WTC11 (cell line): ENCODE measurements at regions of chr11 and their contacts with region 1.

Region 1: GRCh38 chr11:66268283-66268951 is at the start of gene RAB1B:
- DNase-seq: peak; percentile 100
- ATAC-seq: peak; percentile 83
- H3K4me3 Mint-ChIP-seq: peak within 1 kb of the TSS; percentile 97
- H3K27ac Mint-ChIP-seq: peak within 1 kb of the TSS; percentile 99
- H3K4me1 Mint-ChIP-seq: peaks cover 12% of the 10 kb centered on the region
- H3K27me3 Mint-ChIP-seq: no peaks in the 10 kb centered on the region; the same call in 1 of the 2 replicates
- CTCF ChIP-seq: no peak
- total RNA-seq, gene RAB1B: 125 to 134 TPM (median 130 TPM) in 3 replicates

Region 2: DNA sequence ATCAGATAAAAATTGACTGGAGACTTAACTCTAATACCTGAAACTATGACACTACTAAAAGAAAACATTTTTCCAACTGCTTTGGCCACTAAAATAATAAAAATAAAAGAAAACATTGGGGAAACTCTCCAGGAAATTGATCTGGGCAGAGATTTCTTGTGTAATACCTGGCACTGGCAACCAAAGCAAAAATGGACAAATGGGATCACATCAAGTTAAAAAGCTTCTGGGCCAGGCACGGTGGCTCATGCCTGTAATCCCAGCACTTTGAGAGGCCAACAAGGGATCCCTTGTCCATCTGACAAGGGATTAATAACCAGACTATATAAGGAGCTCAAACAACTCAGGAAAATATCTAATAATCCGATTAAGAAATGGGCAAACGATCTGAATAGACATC is 64.6 kb before region 1 on chr11:
- CTCF ChIA-PET with region 1: no interaction called
- POLR2A ChIA-PET with region 1: no interaction called
- DNase-seq: no peak
- ATAC-seq: no peak
- H3K4me3 Mint-ChIP-seq: no peak overlapping the region
- H3K27ac Mint-ChIP-seq: no peak overlapping the region
- H3K4me1 Mint-ChIP-seq: no peaks in the 10 kb centered on the region
- H3K27me3 Mint-ChIP-seq: no peaks in the 10 kb centered on the region
- CTCF ChIP-seq: no peak

Region 3: DNA sequence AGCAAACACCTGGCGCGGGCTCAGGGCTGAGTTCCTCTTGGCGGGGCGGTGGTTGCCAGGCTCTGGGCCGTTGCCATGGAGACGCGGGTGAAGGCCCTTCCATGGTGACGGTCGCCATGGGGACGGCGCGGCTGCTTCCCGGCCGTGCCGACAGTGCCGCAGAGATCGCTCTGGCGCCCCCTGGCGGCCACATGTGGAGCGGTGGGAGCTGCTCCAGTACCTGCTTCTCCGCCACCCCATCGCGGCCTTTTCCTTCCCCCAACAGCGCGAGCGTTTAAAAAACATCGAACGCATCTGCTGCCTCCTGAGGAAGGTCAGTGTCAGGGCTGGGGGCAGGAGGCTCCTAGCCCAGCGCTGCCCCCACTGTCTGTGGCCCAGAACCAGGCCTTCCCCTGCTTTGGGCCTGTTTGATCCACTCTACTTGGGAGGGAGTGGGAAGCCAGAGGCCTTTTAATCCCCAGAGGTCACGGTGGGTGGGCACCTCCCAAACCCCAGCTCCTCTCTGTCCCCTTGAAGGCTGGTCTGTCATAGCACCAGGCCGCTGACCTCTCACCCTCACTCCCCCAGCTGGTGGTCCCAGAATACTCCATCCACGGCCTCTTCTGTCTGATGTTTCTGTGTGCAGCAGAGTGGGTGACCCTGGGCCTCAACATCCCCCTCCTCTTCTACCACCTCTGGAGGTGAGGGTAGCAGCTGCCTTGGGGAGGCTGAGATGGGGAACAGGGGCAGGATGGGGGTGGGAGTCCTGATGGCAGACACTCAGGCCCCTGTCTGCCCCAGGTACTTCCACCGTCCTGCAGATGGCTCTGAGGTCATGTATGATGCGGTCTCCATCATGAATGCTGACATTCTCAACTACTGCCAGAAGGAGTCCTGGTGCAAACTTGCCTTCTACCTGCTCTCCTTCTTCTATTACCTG is 14.3 kb after region 1 on chr11:
- CTCF ChIA-PET with region 1: interaction called, 33 read pairs
- POLR2A ChIA-PET with region 1: interaction called, 5 read pairs
- DNase-seq: peak; percentile 100
- ATAC-seq: peak; percentile 79
- H3K4me3 Mint-ChIP-seq: no peak overlapping the region; the same call in 1 of the 2 replicates
- H3K27ac Mint-ChIP-seq: 0 out of 2 replicates have a peak overlapping the region, but pooled peaks have one; percentile 15
- H3K4me1 Mint-ChIP-seq: peaks cover 24% of the 10 kb centered on the region
- H3K27me3 Mint-ChIP-seq: peaks cover 22% of the 10 kb centered on the region
- CTCF ChIP-seq: peak; percentile 98

Region 4: DNA sequence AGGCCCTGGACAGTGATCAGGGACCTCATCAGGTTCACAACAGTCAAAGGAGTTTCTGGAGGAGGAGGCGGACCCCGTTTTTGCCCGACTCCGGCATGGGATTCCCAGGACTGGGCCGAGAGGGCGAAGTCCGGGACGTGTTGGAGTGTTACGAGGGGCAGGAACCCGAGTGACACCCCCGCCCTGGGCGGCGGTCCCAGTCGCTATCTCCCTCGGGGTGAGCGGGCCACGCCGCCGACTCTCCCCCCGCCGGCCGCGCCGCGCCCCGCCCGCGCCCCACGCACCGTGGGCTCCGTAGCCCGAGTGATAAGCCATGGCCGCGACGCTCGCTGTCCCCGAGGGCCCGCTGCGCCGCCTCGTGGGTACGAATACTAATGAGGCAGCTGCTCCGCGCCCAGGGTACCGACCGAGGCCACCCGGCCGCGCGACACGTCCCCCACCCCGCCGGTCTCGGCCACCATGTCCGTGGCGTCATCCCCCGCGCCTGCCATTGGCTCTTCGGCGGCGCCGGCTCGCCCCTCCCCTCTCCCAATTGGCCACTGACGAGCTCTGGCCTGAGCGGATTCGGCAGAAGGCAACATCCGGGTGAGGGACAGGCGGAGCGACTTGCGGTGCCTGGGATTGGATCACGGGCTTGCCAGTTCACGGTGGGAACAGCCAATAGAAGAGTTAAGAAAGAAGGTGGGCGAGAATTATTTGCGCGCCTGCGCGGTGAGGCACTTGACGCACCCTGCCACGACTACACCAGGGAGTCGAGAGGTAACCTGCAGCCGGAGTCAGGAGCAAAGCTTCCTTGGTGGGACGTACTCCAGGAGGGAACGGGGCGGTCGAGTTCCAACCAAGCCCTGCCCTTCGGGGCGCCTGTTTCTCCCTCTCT is 20.5 kb after region 1 on chr11 and contains the start of gene YIF1A:
- CTCF ChIA-PET with region 1: interaction called, 16 read pairs
- POLR2A ChIA-PET with region 1: interaction called, 3 read pairs
- DNase-seq: peak; percentile 98
- ATAC-seq: peak; percentile 95
- H3K4me3 Mint-ChIP-seq: peak within 1 kb of the TSS; percentile 96
- H3K27ac Mint-ChIP-seq: peak within 1 kb of the TSS; percentile 96
- H3K4me1 Mint-ChIP-seq: peaks cover 20% of the 10 kb centered on the region
- H3K27me3 Mint-ChIP-seq: peaks cover 37% of the 10 kb centered on the region
- CTCF ChIP-seq: no peak
- total RNA-seq, gene YIF1A: 86.0 to 86.9 TPM (median 86.4 TPM) in 3 replicates